ENCODE measurements at regions of chr5 and their contacts with region 1.

Region 1: GRCh38 chr5:148374692-148375360 is 8.9 kb upstream of the FBXO38 start:
- DNase-seq: peak; percentile 24
- ATAC-seq: peak; percentile 53 to 87

Region 2: GRCh38 chr5:148186248-148186996 is 188.4 kb before region 1 on chr5:
- intact Hi-C with region 1: loop called (anchors 10 kb)
- DNase-seq: no peak
- ATAC-seq: peak; percentile 27 to 71

Region 3: DNA sequence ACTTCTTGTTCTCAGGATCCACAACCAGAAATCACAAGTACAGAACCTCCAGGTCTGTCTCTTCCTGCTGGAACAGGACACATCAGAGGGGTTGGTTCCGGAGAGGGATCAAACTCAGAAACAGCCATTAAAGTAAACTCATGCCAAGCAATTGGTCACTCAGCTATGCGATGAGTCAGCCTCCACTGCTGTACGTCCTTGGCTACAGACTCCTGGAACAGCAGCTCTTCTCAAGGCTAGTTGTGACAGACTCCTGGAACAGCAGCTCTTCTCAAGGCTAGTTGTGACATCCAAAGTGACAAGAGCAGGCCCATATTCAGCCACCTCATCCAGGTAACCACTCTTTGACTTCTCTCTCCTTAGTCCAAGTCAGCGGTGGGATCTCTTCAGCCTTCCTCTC is 106.3 kb before region 1 on chr5 and contains the start of gene SPINK13:
- intact Hi-C with region 1: no loop called
- DNase-seq: peak; percentile 30
- ATAC-seq: peak; percentile 44 to 87
- total RNA-seq, gene SPINK13: not detected

Region 4: DNA sequence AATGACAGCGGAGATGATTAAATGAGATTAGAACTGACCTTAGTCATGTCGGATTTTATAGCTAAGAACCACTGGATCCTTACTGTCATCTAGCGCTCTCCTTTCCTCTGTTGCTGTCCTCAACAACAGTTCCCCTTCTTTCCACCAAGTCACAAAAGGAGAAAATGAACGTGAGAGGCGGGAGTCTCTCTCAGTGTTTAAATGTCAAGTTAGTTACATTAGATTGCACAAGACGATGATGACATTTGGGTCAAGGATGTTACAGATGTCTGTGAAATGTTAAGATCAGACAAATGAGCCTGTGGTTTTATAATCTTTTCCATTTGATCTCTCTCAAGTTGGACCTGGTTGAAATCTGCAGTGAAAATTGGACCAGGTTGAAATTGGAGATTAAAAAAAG is 62.4 kb after region 1 on chr5:
- intact Hi-C with region 1: no loop called
- DNase-seq: no peak
- ATAC-seq: no peak